WTC11 (cell line): ENCODE measurements at regions of chr12 and their contacts with region 1.

Region 1: DNA sequence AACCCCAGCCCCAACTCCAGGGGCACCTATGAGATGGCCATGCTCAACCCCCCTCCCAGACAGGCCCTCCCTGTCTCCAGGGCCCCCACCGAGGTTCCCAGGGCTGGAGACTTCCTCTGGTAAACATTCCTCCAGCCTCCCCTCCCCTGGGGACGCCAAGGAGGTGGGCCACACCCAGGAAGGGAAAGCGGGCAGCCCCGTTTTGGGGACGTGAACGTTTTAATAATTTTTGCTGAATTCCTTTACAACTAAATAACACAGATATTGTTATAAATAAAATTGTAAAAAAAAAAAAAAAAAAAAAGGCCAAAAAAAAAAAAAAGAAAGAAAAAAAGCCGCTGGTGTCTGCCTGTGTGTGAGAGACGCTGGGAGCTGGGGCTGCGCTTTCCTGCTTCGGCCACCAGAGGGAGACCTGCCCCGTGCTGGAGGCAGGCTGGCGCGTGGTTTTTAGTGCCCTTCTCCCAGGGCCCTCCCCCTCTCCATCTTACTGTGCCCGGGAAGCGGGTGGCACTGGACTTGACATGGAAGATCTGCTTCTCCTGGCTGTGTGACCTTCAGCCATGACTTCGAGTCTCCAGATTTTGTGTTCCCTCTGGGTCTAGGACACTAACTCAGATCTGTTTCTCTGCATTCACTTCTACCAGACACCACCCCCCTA is 3.4 kb upstream of the NXPH4 start:
- DNase-seq: peak; percentile 87
- ATAC-seq: peak; percentile 14
- H3K4me3 Mint-ChIP-seq: peak overlapping the region; percentile 53
- H3K27ac Mint-ChIP-seq: peak overlapping the region; percentile 79; the same call in 1 of the 2 replicates
- H3K4me1 Mint-ChIP-seq: peaks cover 35% of the 10 kb centered on the region
- H3K27me3 Mint-ChIP-seq: peaks cover 44% of the 10 kb centered on the region
- CTCF ChIP-seq: peak; percentile 87

Region 2: DNA sequence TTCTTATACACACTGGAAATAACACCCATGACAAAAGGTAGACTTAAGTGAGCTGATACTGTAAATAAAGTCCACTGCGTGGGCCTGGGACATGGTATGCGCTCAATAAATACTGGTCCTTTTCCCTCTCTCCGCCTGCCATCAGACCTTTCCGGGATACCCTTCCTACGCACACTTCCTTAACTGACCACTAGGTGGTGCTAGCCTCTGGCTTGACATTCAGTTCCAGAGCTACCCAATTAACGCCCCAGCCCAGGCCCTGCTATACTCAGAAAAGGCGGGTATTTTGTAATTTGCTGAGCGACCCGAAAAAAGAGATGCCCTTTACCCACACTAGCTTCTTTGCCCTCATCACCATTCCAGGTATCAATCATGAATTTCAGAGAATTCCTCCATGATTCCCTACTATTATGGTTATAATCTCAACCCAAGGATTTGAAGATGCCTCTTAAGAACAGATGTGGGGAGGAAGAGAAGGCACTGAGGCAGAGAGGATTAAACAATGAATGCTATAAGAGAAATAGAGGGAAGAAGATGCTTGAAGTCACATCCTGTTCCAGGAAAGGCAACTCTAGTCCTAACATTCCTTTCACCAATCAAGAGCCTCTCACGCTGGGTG is 88.8 kb before region 1 on chr12:
- CTCF ChIA-PET with region 1: interaction called, 34 read pairs
- POLR2A ChIA-PET with region 1: interaction called, 5 read pairs
- DNase-seq: peak; percentile 84
- ATAC-seq: peak; percentile 59
- H3K4me3 Mint-ChIP-seq: no peak overlapping the region
- H3K27ac Mint-ChIP-seq: no peak overlapping the region
- H3K4me1 Mint-ChIP-seq: peaks cover 15% of the 10 kb centered on the region
- H3K27me3 Mint-ChIP-seq: peaks cover 6% of the 10 kb centered on the region
- CTCF ChIP-seq: peak; percentile 92

Region 3: DNA sequence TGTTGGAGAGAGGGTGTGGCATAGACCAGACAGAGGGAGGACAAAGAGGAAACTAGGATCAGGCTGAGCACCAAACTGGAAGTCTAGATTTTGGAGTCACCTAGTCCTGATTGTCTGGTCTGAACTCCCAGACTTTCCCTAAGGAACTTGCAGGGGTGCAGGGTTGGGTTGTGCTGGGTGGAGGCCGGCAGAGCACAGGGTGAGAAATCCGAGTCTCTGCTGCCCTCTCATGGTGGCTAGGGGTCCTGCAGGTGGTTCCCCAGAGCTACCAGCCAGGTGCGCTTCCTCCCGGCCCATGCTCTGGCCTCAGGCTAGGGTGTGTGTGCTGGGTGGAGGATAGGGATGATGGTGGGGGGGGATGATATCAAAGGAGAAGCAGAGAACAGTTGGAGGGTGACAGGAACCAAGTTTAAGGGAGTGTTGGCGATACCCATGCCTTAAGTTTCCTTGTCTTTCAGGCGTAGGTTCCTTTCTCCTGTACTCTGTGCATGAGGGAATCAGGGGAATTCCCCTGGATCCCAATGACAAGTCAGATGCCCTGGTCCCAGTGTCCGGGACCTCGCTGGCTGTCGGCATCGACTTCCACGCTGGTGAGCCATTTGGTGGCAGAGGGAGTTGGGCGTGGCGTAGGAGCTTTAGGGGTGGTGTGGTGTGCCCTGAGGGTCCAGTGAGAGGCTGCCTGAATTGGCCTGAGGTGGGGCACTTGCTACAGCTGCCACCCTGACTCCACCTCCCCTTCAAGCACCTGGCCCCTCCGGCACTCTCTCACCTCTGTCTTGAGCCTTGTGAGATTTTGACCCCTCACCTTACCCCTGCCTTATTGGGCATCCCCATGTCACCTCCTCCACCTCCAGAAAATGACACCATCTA is 30.0 kb before region 1 on chr12:
- CTCF ChIA-PET with region 1: interaction called, 11 read pairs
- POLR2A ChIA-PET with region 1: no interaction called
- DNase-seq: peak; percentile 90
- ATAC-seq: peak; percentile 96
- H3K4me3 Mint-ChIP-seq: no peak overlapping the region
- H3K27ac Mint-ChIP-seq: peak overlapping the region; percentile 99
- H3K4me1 Mint-ChIP-seq: peaks cover 4% of the 10 kb centered on the region
- H3K27me3 Mint-ChIP-seq: no peaks in the 10 kb centered on the region
- CTCF ChIP-seq: peak; percentile 81; the same call in 1 of the 2 replicates

Region 4: GRCh38 chr12:57229634-57230380 is 16.6 kb after region 1 on chr12 and contains the start of gene SHMT2:
- CTCF ChIA-PET with region 1: interaction called, 197 read pairs
- POLR2A ChIA-PET with region 1: interaction called, 17 read pairs
- DNase-seq: peak; percentile 97
- ATAC-seq: peak; percentile 41
- H3K4me3 Mint-ChIP-seq: peak within 1 kb of the TSS; percentile 98
- H3K27ac Mint-ChIP-seq: peak within 1 kb of the TSS; percentile 94
- H3K4me1 Mint-ChIP-seq: peaks cover 49% of the 10 kb centered on the region
- H3K27me3 Mint-ChIP-seq: peaks cover 53% of the 10 kb centered on the region
- CTCF ChIP-seq: no peak
- total RNA-seq, gene SHMT2: 262 to 297 TPM (median 265 TPM) in 3 replicates

Region 5: DNA sequence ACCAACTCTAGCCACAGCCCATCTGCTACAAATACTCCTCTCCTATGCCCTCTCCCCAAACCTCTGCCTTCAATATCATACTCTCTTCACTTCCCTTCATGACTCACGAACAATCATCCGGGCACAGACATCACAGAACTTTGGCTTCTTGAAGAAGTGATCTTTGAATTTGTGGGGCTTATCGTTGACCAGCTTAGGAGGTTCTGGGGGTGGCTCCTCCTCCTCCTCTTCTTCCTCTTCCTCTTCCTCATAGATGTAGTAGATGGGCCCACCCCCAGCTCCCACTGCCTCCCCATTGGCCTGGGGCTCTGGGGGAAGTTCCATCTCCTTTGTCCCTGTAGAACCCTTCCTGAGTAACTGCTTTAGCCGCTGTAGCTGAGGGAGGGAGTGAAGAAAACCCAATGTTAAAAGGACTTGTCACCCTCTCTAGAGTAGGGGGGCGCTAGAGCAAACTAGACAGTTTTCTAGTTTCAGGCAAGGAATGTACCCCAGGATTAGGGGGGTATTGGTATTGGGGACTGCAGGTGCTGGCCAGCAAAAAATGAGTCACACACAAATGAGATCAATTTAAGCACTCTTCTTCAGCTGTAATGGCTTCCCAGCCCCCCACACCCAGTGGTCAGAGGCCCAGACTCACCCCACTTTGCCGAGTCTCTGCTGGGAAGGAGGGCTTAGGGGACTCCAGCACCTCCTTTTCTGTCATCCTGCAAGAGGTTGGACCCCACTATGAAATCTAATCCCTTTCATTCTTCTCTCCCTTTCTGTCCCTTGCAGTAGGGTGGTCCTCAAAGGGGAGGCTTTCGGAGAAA is 36.0 kb after region 1 on chr12:
- CTCF ChIA-PET with region 1: interaction called, 415 read pairs
- POLR2A ChIA-PET with region 1: interaction called, 4 read pairs
- DNase-seq: peak; percentile 7
- ATAC-seq: peak; percentile 6; the same call in 1 of the 2 replicates
- H3K4me3 Mint-ChIP-seq: no peak overlapping the region
- H3K27ac Mint-ChIP-seq: peak overlapping the region; percentile 11; the same call in 1 of the 2 replicates
- H3K4me1 Mint-ChIP-seq: peaks cover 50% of the 10 kb centered on the region
- H3K27me3 Mint-ChIP-seq: peaks cover 10% of the 10 kb centered on the region
- CTCF ChIP-seq: no peak

Region 6: GRCh38 chr12:57268264-57268663 is 55.1 kb after region 1 on chr12:
- CTCF ChIA-PET with region 1: interaction called, 18 read pairs
- POLR2A ChIA-PET with region 1: no interaction called
- DNase-seq: no peak
- ATAC-seq: no peak
- H3K4me3 Mint-ChIP-seq: no peak overlapping the region
- H3K27ac Mint-ChIP-seq: no peak overlapping the region
- H3K4me1 Mint-ChIP-seq: no peaks in the 10 kb centered on the region
- H3K27me3 Mint-ChIP-seq: no peaks in the 10 kb centered on the region
- CTCF ChIP-seq: no peak

Region 7: GRCh38 chr12:57476162-57476992 is 263.2 kb after region 1 on chr12:
- CTCF ChIA-PET with region 1: interaction called, 10 read pairs
- POLR2A ChIA-PET with region 1: no interaction called
- DNase-seq: peak; percentile 68
- ATAC-seq: peak; percentile 44
- H3K4me3 Mint-ChIP-seq: peak overlapping the region; percentile 77
- H3K27ac Mint-ChIP-seq: no peak overlapping the region
- H3K4me1 Mint-ChIP-seq: peaks cover 35% of the 10 kb centered on the region
- H3K27me3 Mint-ChIP-seq: peaks cover 99% of the 10 kb centered on the region
- CTCF ChIP-seq: peak; percentile 63